ENCODE measurements at regions of chr3 and their contacts with region 1.

Region 1: DNA sequence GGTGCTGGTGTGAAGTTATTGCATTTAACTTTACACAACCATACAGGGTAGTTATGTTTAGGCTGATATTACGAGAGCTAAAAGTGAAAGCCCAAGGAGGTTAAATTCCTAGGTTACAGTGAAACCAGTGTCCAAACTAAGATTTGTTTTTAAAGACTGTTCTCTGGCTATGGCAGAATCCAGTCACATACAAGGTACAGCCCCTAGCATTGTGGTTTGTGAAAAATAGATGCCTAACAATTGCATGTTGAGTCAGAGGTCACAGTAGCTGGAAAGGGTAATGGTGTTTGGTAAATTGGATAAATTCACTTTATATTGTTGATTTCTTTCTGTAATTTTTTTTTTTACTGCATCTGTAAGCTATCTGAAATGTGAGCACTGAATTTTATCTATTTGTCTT is 614.6 kb upstream of the TBL1XR1 start:
- DNase-seq: no peak
- ATAC-seq: peak; percentile 86
- H3K4me3 Mint-ChIP-seq: no peak overlapping the region
- H3K27ac Mint-ChIP-seq: no peak overlapping the region
- H3K4me1 Mint-ChIP-seq: peaks cover 35% of the 10 kb centered on the region
- H3K27me3 Mint-ChIP-seq: no peaks in the 10 kb centered on the region

Region 2: GRCh38 chr3:177917234-177917861 is 105.5 kb after region 1 on chr3:
- CTCF ChIA-PET with region 1: no interaction called
- POLR2A ChIA-PET with region 1: interaction called, 12 read pairs
- intact Hi-C with region 1: no loop called
- DNase-seq: no peak
- ATAC-seq: no peak
- H3K4me3 Mint-ChIP-seq: no peak overlapping the region
- H3K27ac Mint-ChIP-seq: no peak overlapping the region
- H3K4me1 Mint-ChIP-seq: no peaks in the 10 kb centered on the region
- H3K27me3 Mint-ChIP-seq: no peaks in the 10 kb centered on the region